Cardiac septum (tissue), 1 donor: ENCODE measurements at regions of chr2 and their contacts with region 1.

Region 1: GRCh38 chr2:85888684-85889626 is at the start of gene ST3GAL5:
- DNase-seq: peak; percentile 94
- total RNA-seq, gene ST3GAL5: 3.8 TPM

Region 2: GRCh38 chr2:85826990-85827878 is 61.7 kb before region 1 on chr2:
- intact Hi-C with region 1: loop called (anchors 2 kb)
- DNase-seq: peak; percentile 79

Region 3: DNA sequence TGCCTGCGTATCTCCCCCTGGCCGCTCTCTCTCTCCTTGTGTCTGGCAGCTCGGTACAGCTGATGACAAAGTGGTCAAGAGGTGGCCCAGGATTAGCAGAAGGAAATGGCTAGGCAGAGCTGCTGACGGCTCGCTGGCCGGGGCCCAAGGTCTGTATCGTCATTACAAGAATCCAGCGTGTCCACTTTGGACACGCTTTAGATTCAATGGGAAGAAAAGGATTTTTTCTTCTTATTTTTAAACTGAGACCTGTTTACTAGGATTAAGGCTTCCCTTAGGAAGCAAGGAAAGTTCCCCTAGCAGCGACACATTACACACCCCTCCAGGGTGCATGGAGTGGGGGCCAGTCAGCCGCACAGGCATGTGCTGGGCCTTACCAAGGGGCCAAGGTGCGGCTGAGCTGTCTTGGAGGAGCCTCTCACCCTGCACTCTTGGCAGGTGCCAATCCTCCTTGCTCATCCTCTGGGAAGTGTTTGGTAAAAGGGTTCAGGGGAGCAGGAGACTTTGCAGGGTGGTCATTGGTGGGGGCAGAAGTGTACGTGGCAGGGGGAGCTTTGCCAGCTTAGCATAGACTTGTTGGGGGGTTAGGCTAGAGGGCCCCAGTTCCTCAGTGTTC is 139.9 kb after region 1 on chr2:
- intact Hi-C with region 1: loop called (anchors 2 kb)
- DNase-seq: peak; percentile 90

Region 4: DNA sequence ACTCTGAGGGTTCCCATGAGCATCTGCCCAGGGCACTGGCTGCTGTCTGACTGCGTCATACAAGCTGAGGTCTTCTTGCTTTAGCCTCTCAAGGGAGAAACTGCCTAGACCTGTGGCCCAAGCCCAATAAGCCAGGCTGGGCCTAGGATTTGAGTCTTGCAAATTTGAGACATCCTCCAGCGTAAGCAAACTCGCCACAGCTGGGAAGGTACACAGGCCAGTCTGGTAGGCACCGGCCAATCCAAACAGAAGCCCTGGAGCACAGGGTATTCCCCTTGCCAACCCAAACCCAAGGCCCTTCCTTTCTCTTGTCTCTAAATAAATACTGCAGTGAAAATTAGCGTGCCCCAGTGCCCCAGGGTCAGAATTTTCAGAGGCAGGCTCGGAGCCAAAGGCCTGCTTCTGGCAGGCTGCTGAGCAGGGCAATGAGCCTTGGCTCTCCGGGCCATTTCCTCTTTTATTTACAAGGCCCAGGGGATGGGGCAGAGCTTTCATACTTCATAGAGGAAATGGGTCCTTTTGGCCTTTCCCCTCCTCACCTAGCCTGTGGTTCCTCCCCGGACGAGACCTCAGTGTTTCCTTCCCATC is 183.4 kb after region 1 on chr2:
- intact Hi-C with region 1: loop called (anchors 2 kb)
- DNase-seq: no peak